ENCODE measurements at regions of chr7 and their contacts with region 1.

Region 1: DNA sequence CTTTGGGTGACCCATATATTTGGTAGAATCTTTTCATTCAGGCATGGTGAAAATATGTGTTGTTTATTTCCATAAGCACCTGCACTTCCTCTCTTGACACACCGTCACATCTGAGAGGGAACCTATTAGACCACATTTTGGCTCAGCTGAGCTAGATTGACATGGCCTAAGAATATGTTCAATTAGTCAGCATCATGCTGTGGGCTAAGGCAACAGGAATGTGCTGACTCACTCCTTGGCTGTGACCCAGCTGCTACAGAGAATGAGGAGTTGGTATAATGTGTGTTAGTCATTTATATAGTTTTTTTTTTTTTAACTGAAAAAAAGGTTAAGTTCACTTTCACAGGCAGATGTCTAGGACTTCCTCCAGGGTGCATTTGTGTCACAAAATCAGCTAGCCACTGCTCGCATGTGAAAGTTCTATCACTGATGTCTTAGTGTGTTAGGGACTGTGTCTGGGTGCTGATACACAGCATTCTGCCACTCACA is 180.6 kb downstream of the SEMA3E start:
- DNase-seq: peak; percentile 99
- H3K4me3 ChIP-seq: no peak overlapping the region
- H3K27ac ChIP-seq: peak overlapping the region; percentile 56
- H3K4me1 ChIP-seq: peaks cover 16% of the 10 kb centered on the region
- H3K27me3 ChIP-seq: no peaks in the 10 kb centered on the region
- CTCF ChIP-seq: no peak
- POLR2A ChIP-seq: no peak

Region 2: GRCh38 chr7:82805527-82805960 is 662.8 kb before region 1 on chr7:
- CTCF ChIA-PET with region 1: no interaction called
- POLR2A ChIA-PET with region 1: no interaction called
- dilution Hi-C with region 1: no loop called
- intact Hi-C with region 1: loop called (anchors 10 kb)
- DNase-seq: peak; percentile 89
- H3K4me3 ChIP-seq: peak overlapping the region in 1 of 3 experiments; percentile 55
- H3K27ac ChIP-seq: peak overlapping the region; percentile 76
- H3K4me1 ChIP-seq: peaks cover 13% of the 10 kb centered on the region
- H3K27me3 ChIP-seq: no peaks in the 10 kb centered on the region
- CTCF ChIP-seq: no peak
- POLR2A ChIP-seq: no peak

Region 3: DNA sequence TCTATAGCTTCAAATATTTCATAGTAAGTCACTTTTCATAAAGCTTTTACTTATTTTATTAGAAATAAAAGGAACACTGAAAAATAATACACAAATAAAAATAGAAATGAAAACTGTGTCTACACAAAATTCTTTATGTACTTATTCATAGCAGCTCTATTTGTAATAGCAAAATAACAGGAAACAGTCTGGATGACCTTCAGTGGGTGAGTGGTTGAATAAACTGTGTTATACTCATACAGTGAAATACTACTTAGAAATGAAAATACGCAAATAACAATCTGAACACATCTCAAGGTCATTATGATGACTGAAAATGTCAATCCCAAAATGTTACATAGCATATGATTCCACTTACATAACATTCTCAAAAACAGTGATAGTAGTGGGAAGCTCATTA is 166.9 kb before region 1 on chr7:
- CTCF ChIA-PET with region 1: no interaction called
- POLR2A ChIA-PET with region 1: no interaction called
- dilution Hi-C with region 1: no loop called
- intact Hi-C with region 1: loop called (anchors 5 kb)
- DNase-seq: peak; percentile 90
- H3K4me3 ChIP-seq: no peak overlapping the region
- H3K27ac ChIP-seq: peak overlapping the region; percentile 82
- H3K4me1 ChIP-seq: peaks cover 10% of the 10 kb centered on the region
- H3K27me3 ChIP-seq: no peaks in the 10 kb centered on the region
- CTCF ChIP-seq: no peak
- POLR2A ChIP-seq: no peak

Measured in endothelial cell of umbilical vein (primary cell).